Gastrocnemius medialis (tissue), 4 donors: ENCODE measurements at regions of chr17 and their contacts with region 1.

Region 1: GRCh38 chr17:31437720-31438420 is 46.4 kb downstream of the RAB11FIP4 start:
- DNase-seq: no peak
- ATAC-seq: no peak
- H3K4me3 ChIP-seq: no peak overlapping the region
- H3K27ac ChIP-seq: no peak overlapping the region
- H3K4me1 ChIP-seq: no peaks in the 10 kb centered on the region
- H3K27me3 ChIP-seq: peaks cover 0 to 2% (median 0%) of the 10 kb centered on the region in 3 donors
- CTCF ChIP-seq: no peak
- POLR2A ChIP-seq: no peak

Region 2: GRCh38 chr17:31226373-31226772 is 211.5 kb before region 1 on chr17:
- in situ Hi-C with region 1: no loop called
- intact Hi-C with region 1: no loop called
- DNase-seq: no peak
- ATAC-seq: no peak
- H3K4me3 ChIP-seq: no peak overlapping the region
- H3K27ac ChIP-seq: no peak overlapping the region
- H3K4me1 ChIP-seq: no peaks in the 10 kb centered on the region
- H3K27me3 ChIP-seq: no peaks in the 10 kb centered on the region
- CTCF ChIP-seq: no peak
- POLR2A ChIP-seq: no peak

Region 3: GRCh38 chr17:31517524-31517923 is 79.7 kb after region 1 on chr17:
- in situ Hi-C with region 1: loop called in 1 of 4 experiments (anchors 5 kb)
- intact Hi-C with region 1: loop called (anchors 2 kb)
- DNase-seq: no peak
- ATAC-seq: no peak
- H3K4me3 ChIP-seq: no peak overlapping the region
- H3K27ac ChIP-seq: no peak overlapping the region
- H3K4me1 ChIP-seq: no peaks in the 10 kb centered on the region
- H3K27me3 ChIP-seq: no peaks in the 10 kb centered on the region
- CTCF ChIP-seq: peak in 3 of 5 experiments; percentile 20 to 37 (median 29)
- POLR2A ChIP-seq: no peak

Region 4: GRCh38 chr17:31524926-31525800 is 87.3 kb after region 1 on chr17:
- in situ Hi-C with region 1: loop called (anchors 5 kb)
- intact Hi-C with region 1: loop called (anchors 1 kb)
- DNase-seq: peak; percentile 58 to 74
- ATAC-seq: peak; percentile 89 to 94
- H3K4me3 ChIP-seq: no peak overlapping the region
- H3K27ac ChIP-seq: no peak overlapping the region
- H3K4me1 ChIP-seq: no peaks in the 10 kb centered on the region
- H3K27me3 ChIP-seq: no peaks in the 10 kb centered on the region
- CTCF ChIP-seq: peak; percentile 86 to 95 (median 91)
- POLR2A ChIP-seq: no peak